Endothelial cell of umbilical vein (primary cell): ENCODE measurements at regions of chr2 and their contacts with region 1.

Region 1: DNA sequence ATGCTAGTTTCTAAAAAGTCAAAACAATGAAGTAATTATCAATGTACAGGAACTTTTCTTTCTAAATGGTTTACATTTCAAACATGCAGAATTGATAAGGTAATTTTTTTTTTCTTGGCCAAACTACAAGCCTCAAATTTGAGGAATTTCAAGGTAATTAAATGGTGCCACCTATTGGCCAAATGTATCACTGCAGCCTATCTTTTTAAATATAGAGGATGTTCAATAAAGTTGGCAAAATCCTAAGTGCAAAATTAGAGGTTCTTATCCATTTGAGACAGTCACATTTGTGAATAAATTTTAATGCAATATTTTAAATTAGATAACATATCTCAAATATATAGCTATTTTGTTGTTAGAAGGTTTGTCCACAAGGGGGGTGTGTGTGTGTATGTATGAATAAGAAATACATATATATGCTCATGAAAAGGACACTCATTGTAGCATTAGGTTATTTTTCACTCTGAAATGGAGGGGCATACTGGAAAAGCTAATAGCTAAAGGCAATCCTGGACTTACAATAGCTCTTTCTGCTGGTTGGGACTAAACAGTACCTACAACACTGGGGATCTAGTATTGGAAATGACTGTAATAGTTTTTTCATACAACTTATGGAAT is 26.2 kb downstream of the MMADHC start:
- DNase-seq: peak; percentile 57
- H3K4me3 ChIP-seq: no peak overlapping the region
- H3K27ac ChIP-seq: no peak overlapping the region
- H3K4me1 ChIP-seq: peaks cover 7% of the 10 kb centered on the region
- H3K27me3 ChIP-seq: no peaks in the 10 kb centered on the region
- CTCF ChIP-seq: peak; percentile 40 to 55
- POLR2A ChIP-seq: no peak

Region 2: GRCh38 chr2:147937744-147938349 is 1623.6 kb before region 1 on chr2:
- CTCF ChIA-PET with region 1: no interaction called
- POLR2A ChIA-PET with region 1: no interaction called
- dilution Hi-C with region 1: no loop called
- intact Hi-C with region 1: loop called (anchors 10 kb)
- DNase-seq: peak; percentile 36
- H3K4me3 ChIP-seq: no peak overlapping the region
- H3K27ac ChIP-seq: no peak overlapping the region
- H3K4me1 ChIP-seq: no peaks in the 10 kb centered on the region
- H3K27me3 ChIP-seq: no peaks in the 10 kb centered on the region
- CTCF ChIP-seq: peak; percentile 51 to 69
- POLR2A ChIP-seq: no peak

Region 3: DNA sequence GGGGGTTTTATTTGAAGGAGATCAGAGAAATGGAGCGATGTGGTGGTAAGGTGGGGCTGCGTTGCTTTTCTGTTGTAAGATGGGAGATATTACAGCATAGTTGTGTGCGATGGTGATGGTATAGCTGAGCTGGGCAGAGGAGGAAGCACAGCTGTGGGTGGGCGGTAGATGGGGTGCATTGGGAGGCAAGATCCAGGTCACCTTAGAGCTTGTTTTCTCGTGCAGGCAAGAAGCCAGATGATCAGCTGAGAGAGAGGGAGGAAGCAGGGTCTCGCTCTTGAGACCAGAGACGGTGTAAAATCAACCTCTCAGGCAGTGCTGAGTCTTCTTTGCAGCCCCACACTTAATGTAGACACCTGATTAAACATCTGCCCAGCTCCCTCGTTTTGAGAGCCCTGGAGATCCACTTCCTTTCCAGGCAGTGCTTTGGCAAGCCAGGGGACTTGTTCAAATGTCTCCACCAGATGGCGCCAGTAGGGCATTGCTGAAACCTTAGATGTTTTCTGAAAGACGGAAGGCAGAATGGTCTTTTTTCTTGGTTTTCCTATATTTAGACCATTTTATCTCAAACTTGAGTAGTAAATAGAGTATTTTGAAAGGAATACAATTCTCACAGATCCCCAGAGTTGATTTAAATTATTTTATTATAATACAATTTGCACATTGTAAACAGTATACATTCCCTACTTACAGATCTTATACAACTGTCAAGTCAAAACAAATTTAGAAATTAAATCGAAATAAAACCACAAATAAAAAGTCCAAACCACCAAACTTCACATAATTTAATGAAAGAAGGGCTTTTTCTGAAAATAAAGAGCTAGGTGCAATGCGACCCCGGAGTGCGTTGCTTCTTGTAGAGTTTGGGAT is 544.1 kb before region 1 on chr2:
- CTCF ChIA-PET with region 1: interaction called, 212 read pairs
- POLR2A ChIA-PET with region 1: no interaction called
- dilution Hi-C with region 1: no loop called
- intact Hi-C with region 1: loop called (anchors 1 kb)
- DNase-seq: peak; percentile 68
- H3K4me3 ChIP-seq: no peak overlapping the region
- H3K27ac ChIP-seq: no peak overlapping the region
- H3K4me1 ChIP-seq: no peaks in the 10 kb centered on the region
- H3K27me3 ChIP-seq: peaks cover 2 to 3% of the 10 kb centered on the region in 2 experiments
- CTCF ChIP-seq: peak; percentile 80 to 88
- POLR2A ChIP-seq: no peak

Region 4: GRCh38 chr2:149087751-149088150 is 473.7 kb before region 1 on chr2:
- CTCF ChIA-PET with region 1: interaction called, 5 read pairs
- POLR2A ChIA-PET with region 1: no interaction called
- dilution Hi-C with region 1: no loop called
- intact Hi-C with region 1: loop called (anchors 2 kb)
- DNase-seq: peak; percentile 4
- H3K4me3 ChIP-seq: no peak overlapping the region
- H3K27ac ChIP-seq: no peak overlapping the region
- H3K4me1 ChIP-seq: no peaks in the 10 kb centered on the region
- H3K27me3 ChIP-seq: peaks cover 0 to 2% of the 10 kb centered on the region in 2 experiments
- CTCF ChIP-seq: peak; percentile 19 to 48
- POLR2A ChIP-seq: no peak

Region 5: DNA sequence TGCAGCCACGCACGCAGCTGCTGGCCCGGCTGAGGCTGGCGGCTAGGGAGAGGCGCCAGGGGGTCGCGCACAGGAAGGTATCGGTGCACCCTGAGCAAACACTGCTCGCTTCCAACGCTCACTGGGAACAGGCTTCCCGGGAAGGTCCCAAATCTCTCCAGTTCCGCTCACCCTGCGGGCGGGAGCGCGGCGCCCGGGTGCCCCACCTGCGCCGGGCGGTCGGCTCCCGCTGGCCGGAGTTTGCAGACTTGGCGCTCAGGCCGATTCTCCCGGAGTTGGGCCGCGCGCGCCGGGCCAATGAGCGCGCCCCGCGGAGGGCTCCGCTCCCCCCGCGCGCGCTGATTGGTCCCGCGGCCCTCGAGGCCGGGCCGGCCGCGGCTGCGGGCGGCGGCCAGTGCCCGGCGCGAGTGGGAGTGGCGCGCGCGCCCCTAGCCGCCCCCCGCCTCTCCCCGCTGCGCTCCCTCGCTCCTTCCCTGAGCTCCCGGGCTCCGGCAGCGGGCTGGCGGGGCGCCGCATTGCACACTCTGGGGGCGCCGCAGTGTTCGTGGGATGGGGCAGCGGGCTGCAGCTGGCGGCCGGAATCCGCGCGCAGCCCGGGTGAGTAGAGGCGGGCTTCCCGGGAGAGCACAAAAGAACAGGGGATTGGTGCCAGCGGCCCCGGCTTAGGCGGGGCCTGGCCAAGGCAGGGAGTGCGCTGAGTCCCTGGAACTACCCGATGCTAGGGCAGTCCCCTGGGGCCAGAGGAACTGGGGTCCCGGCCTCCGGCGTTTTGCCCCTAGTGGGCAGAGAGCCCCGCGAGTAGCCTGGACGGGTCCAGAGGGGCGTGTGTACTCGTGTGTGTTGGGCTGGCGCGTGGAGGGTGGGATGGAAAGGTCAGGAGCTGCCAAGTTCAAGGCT is 231.0 kb before region 1 on chr2 and contains the start of gene LYPD6:
- CTCF ChIA-PET with region 1: interaction called, 6 read pairs
- POLR2A ChIA-PET with region 1: no interaction called
- dilution Hi-C with region 1: no loop called
- intact Hi-C with region 1: loop called (anchors 5 kb)
- DNase-seq: peak; percentile 76
- H3K4me3 ChIP-seq: peak within 1 kb of the TSS; percentile 78 to 89 (median 87)
- H3K27ac ChIP-seq: peak within 1 kb of the TSS; percentile 41
- H3K4me1 ChIP-seq: peaks cover 12% of the 10 kb centered on the region
- H3K27me3 ChIP-seq: no peaks in the 10 kb centered on the region
- CTCF ChIP-seq: peak; percentile 6 to 15
- POLR2A ChIP-seq: no peak
- total RNA-seq, gene LYPD6: 3.1 and 4.0 TPM in 2 replicates